ENCODE measurements at regions of chr12 and their contacts with region 1.

Region 1: DNA sequence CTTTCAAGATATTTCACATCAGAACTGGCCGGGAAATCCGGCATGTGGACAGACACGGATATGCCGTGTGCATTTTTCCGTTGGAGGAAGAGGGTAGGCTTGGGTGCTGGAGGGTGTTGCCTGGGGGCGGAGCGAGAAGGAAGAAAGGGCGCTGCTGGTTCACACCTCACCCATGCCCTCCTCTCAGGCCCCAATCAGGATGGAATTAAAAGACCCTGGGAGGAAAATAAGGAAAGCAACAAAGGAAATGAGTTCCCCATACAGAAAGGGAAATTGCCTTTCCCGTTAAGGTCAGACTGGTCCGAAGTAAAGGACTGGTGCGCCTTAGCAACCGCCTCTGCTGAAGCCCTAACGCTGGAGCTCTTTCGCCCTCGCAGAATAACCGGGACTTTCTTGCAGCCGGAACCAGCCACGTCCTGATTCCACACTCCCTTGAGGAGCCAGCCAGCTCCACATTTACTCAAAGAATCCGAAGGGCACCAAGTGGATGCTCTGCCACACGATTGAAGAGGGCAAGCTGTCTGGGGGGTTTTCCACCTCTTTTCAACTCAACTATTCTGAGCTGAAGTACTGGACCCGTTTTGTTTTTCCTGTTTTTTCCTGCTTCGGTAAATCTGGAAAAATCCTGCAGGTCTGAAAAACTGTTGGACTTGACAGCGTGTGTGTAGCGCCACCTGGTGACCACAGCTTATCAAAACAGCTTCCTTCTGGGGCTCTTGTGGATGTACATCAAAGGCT is 37.7 kb upstream of the BCL2L14 start:
- DNase-seq: peak; percentile 81
- H3K4me3 Mint-ChIP-seq: peak overlapping the region; percentile 72
- H3K27ac Mint-ChIP-seq: peak overlapping the region; percentile 88
- H3K4me1 Mint-ChIP-seq: peaks cover 69% of the 10 kb centered on the region
- H3K27me3 Mint-ChIP-seq: peaks cover 1% of the 10 kb centered on the region

Region 2: DNA sequence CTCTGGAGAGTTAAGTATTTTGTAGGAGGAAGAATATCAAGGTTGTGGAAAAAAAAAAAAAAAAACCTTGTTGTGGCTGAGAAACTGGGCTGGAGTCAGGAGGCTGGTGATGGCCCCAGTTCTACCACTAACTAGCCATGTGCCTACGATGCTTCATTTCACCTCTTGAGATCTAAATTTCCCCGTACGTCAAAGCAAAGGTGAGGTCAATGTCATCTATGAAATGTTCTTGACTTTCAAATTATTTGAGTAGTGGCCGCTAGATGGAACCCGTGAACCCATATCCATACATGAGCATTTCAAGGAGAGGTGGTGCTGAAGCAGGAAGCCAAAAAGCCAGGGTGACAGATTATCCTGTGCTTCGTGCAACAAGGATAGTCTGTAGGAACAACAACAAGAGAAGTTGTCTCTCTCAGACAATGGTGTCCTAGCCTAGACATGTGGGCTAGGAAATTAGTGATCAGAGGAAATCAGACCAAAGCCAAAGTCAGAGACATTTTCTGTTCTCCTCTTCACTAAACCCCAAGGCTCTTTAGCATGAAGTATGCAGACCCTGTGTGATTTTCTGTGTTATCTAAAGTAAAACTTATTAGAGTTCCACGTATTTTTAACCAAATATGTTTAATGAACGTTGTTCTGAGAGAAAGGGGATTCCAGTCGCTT is 479.0 kb before region 1 on chr12:
- CTCF ChIA-PET with region 1: interaction called, 23 read pairs
- POLR2A ChIA-PET with region 1: no interaction called
- intact Hi-C with region 1: loop called (anchors 1 kb)
- DNase-seq: peak; percentile 62
- H3K4me3 Mint-ChIP-seq: no peak overlapping the region
- H3K27ac Mint-ChIP-seq: peak overlapping the region; percentile 47
- H3K4me1 Mint-ChIP-seq: peaks cover 23% of the 10 kb centered on the region
- H3K27me3 Mint-ChIP-seq: peaks cover 4% of the 10 kb centered on the region

Region 3: GRCh38 chr12:11724888-11725311 is 308.1 kb before region 1 on chr12:
- CTCF ChIA-PET with region 1: interaction called, 12 read pairs
- POLR2A ChIA-PET with region 1: interaction called, 3 read pairs
- intact Hi-C with region 1: loop called (anchors 5 kb)
- DNase-seq: no peak
- H3K4me3 Mint-ChIP-seq: no peak overlapping the region
- H3K27ac Mint-ChIP-seq: no peak overlapping the region
- H3K4me1 Mint-ChIP-seq: peaks cover 78% of the 10 kb centered on the region
- H3K27me3 Mint-ChIP-seq: no peaks in the 10 kb centered on the region

Region 4: DNA sequence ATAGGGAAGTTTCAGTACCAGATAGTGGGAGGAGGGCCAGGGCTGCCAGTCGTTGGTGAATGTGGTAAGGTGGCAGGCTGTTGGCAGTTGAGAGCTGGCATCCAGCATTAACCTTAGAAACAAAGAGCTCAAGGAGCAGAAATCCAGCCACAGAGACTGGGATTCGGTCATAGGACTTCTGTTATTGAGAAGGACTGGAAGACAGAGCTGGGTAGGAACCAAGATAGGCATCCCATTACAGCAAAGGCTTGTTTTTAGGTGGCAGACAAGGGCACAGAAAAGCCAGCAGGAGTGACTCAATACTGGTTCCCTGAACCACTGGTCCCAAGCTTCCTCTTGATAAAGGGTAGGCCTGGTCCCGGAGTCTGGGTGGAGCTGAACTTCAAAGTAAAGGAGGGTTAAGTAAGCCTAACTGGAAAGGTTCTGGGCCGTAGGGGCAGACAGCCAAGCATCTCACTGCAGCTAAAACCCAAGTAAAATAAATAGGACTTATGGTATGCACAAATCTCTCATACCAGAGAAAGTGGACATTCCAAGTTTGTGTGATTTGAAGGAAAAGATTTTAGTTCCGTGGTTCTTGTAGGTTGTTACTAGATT is 235.6 kb before region 1 on chr12:
- CTCF ChIA-PET with region 1: interaction called, 10 read pairs
- POLR2A ChIA-PET with region 1: no interaction called
- intact Hi-C with region 1: no loop called
- DNase-seq: no peak
- H3K4me3 Mint-ChIP-seq: no peak overlapping the region
- H3K27ac Mint-ChIP-seq: peak overlapping the region; percentile 3
- H3K4me1 Mint-ChIP-seq: peaks cover 55% of the 10 kb centered on the region
- H3K27me3 Mint-ChIP-seq: no peaks in the 10 kb centered on the region

Region 5: DNA sequence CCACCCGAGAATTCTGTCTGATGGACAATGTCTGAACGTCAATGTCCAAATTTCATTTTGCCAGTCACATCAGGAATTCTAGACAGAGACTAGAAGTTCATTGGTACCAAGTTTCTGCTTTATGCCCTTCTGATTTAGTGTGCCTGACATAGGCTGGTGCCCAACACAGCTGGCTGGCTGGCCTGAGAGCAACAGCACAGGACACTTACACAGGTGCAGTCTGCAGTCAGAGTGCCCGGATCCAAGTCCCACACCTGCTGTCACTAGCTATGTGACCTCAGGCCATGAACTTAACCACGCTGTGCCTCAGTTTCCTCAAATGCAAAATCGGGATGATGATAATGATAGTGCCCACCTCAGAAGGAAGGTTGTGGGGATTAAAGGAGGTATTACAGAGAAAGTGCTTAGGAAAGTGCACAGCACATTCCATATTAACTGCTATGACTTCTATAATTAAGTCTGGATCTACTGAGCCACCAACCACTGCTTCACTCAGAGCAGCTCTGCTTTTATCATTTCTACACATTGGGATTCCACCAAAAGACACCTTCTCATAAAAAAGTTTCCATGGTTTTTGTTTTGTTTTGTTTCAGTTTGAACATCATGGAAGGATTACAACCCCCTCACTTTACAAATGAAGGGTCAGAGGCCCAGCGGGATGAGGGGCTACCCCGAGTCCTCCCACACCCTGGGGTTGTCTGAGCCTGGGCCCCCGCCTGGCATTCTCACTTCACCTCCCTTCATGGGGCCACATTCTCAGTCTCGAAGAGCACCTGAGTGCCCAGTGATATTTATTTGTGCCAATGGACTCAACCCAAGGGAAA is 131.1 kb before region 1 on chr12:
- CTCF ChIA-PET with region 1: interaction called, 21 read pairs
- POLR2A ChIA-PET with region 1: no interaction called
- intact Hi-C with region 1: no loop called
- DNase-seq: peak; percentile 81
- H3K4me3 Mint-ChIP-seq: peak overlapping the region; percentile 50
- H3K27ac Mint-ChIP-seq: peak overlapping the region; percentile 92
- H3K4me1 Mint-ChIP-seq: peaks cover 52% of the 10 kb centered on the region
- H3K27me3 Mint-ChIP-seq: no peaks in the 10 kb centered on the region

Region 6: GRCh38 chr12:12327802-12328201 is 294.8 kb after region 1 on chr12:
- CTCF ChIA-PET with region 1: interaction called, 20 read pairs
- POLR2A ChIA-PET with region 1: no interaction called
- intact Hi-C with region 1: loop called (anchors 2 kb)
- DNase-seq: no peak
- H3K4me3 Mint-ChIP-seq: no peak overlapping the region
- H3K27ac Mint-ChIP-seq: no peak overlapping the region
- H3K4me1 Mint-ChIP-seq: peaks cover 15% of the 10 kb centered on the region
- H3K27me3 Mint-ChIP-seq: no peaks in the 10 kb centered on the region

Measured in activated CD4-positive, alpha-beta memory T cell treated with anti-CD3 and anti-CD28 coated beads for 36 hours (primary cell).